Activated naive CD4-positive, alpha-beta T cell treated with anti-CD3 and anti-CD28 coated beads for 36 hours (primary cell): ENCODE measurements at regions of chr3 and their contacts with region 1.

Region 1: DNA sequence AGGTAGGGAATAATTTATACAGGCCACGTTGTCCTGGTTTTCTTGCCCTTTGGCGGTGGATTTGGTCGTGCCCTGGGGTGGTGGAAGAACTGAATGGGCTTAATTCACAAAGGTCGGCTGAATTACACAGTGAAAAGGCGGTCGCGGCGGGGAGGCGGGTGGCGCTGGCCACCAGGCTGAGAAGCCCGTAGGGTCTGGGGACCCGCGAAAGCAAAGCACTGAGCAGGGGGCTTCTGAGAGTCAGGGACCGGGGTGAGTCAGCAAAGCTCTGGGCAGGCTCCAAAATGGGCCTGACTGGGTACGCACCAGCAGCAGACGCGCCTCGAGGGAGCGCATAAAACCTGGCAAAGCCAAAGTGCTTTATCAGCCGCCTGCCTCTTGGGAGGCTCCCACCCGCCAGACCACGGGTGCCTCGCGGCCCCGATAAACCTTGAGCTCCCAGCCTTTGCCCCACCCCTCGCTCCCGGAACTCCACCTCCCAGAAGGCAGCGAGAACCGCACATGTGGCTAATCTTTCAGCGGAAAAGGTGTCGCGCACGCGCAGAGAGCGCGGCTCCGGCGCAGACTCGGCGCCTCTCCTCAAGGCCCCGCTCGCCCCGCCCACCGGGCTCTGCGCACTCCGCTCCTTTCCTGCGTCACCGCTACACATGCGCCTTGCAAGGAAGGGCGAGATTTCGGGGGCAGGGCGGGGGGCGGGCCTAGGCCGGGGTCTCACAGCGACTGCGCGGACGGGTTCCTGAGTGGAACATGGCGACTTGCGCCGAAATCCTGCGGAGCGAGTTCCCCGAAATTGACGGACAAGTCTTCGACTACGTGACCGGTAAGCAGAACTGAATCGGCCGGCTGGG is at the start of gene ABCF3:
- DNase-seq: peak; percentile 99
- H3K4me3 Mint-ChIP-seq: peak within 1 kb of the TSS; percentile 94
- H3K27ac Mint-ChIP-seq: peak within 1 kb of the TSS; percentile 92
- H3K4me1 Mint-ChIP-seq: peaks cover 28% of the 10 kb centered on the region
- H3K27me3 Mint-ChIP-seq: no peaks in the 10 kb centered on the region
- total RNA-seq, gene ABCF3: 38.5 to 39.1 TPM

Region 2: GRCh38 chr3:184154885-184155643 is 30.6 kb before region 1 on chr3 and contains the start of gene DVL3:
- CTCF ChIA-PET with region 1: no interaction called
- intact Hi-C with region 1: loop called (anchors 1 kb)
- DNase-seq: peak; percentile 25
- H3K4me3 Mint-ChIP-seq: peak within 1 kb of the TSS; percentile 94
- H3K27ac Mint-ChIP-seq: peak within 1 kb of the TSS; percentile 66
- H3K4me1 Mint-ChIP-seq: peaks cover 19% of the 10 kb centered on the region
- H3K27me3 Mint-ChIP-seq: no peaks in the 10 kb centered on the region
- total RNA-seq, gene DVL3: 19.6 to 19.9 TPM

Region 3: GRCh38 chr3:184272269-184272668 is 86.6 kb after region 1 on chr3:
- CTCF ChIA-PET with region 1: no interaction called
- intact Hi-C with region 1: no loop called
- DNase-seq: no peak
- H3K4me3 Mint-ChIP-seq: no peak overlapping the region
- H3K27ac Mint-ChIP-seq: no peak overlapping the region
- H3K4me1 Mint-ChIP-seq: peaks cover 4% of the 10 kb centered on the region
- H3K27me3 Mint-ChIP-seq: peaks cover 34% of the 10 kb centered on the region

Region 4: DNA sequence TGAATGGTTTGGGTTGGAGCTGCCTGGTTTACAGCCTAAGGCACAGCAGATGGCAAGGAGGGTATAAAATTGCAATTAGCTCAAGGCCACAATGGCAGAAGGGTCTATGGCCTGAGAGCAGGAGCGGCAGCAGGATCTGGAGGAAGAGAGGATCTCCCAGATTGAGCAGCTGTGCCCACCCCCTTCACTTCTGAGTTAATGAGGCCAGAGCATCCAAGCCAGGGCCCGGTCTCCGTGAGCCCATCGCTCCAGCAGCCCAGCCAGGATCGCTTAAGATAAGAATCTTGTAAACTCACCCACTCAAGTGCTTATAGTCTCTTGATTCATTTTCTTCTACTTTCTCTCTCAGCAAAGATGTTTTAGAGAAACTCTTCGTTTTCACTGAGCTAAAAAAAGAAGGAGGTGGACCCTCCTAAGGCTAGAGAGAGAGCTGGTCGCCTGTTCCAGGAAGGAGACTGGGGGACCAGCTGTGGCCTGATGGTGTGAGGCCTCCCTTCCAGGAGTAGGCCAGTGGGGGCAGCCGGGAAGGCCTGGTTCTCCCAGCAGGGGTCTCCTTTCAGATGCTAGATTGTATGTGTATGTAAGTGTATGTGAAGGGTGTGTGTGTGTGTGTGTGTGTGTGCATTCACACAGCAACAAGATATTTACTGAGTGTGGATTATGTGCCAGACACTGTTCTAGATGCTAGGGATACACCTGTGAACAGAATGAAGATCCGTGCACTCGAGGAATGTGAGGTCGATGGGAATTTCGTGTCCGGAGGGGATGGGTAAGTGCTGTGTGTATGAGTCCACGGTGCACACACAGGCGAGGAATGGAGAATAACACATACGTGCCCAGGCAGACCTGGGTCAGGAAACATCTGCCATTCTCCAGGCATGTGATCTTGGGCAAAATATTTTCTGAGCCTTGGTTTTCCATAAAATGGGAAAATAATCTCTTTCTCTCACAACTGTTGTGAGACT is 507.6 kb after region 1 on chr3:
- CTCF ChIA-PET with region 1: no interaction called
- intact Hi-C with region 1: no loop called
- DNase-seq: no peak
- H3K4me3 Mint-ChIP-seq: no peak overlapping the region
- H3K27ac Mint-ChIP-seq: no peak overlapping the region
- H3K4me1 Mint-ChIP-seq: no peaks in the 10 kb centered on the region
- H3K27me3 Mint-ChIP-seq: no peaks in the 10 kb centered on the region